Posterior vena cava (tissue), 2 donors: ENCODE measurements at regions of chr17 and their contacts with region 1.

Region 1: DNA sequence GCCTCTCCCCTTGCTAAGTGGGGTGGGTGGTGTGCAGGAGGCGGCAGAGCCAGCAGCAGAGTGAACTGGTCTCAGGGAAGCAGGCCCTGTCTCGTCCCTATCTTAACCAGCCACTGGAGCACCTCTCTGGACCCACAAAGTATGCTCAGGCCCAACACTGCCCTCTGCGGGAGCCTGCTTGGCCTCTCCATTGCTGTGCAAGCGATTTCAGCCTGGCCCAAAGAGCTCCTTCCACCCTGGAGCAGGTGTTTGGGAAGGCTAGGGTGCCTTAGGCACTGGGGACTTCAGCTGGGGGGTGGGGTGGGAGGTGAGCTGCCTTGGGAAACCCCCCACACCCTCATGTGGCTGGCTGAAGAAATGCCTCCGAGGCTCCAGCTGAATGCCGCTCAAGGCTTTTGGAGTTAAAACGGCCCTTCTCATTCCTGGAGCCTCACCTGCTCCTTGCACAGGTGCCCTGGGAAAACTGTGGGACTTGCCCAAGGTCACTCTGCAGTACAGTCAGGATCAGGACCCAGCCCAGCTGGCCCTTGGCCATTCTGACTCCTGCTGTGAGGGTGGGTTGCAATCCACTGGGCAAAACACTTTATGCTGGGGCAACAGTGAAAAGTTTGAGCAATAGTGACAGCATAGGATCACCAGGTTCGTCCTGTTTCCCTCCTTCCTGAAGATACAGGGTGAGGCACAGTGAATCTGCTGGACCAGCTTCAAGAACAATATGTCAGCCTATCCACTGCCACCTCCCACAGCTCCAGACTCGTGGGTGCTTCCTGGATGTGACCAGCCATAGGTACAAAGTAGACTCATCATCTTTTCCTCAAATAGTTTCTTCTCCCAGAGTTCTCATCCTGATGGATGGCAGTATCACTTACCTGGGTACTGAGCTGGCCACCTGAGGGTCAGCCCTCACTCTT is 5.9 kb upstream of the UBE2O start:
- DNase-seq: no peak

Region 2: GRCh38 chr17:76121932-76122430 is 336.9 kb before region 1 on chr17:
- intact Hi-C with region 1: no loop called
- DNase-seq: no peak

Region 3: DNA sequence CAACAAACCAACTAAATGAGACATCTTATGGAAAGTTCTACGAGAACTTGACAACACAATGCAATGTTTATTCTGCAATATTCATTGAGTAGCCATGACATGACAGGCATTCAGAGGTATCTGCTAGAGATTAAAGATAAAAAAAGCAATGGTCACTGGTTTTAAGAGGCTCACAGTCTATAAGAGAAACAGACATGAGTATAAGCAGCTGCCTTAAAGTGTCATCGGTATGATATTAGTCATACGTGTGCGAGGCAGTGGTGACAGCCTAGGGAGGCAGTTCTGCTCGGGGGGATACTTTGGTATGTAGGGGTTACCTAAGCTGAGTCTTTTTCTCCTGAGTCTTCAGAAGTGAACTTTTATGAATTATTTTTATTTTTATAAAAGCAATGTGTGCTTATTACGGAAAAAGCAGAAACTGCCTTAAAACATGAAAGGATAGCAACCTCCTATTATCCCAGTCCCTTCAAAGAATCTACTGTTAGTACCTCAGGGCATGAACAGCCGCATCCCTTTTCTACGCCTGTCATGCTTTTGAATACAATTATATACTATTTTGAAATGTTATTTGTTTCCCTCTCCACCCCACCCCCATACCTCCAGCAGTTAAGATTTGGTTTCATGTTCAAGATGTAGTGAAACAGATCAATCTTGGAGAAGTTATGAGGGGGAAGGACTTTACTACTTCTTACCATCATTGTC is 177.0 kb after region 1 on chr17:
- intact Hi-C with region 1: loop called in 1 of 2 experiments (anchors 5 kb)
- DNase-seq: no peak